OCI-LY7 (cell line): ENCODE measurements at regions of chr7 and their contacts with region 1.

Region 1: GRCh38 chr7:64887756-64888508 is 15.1 kb upstream of the ZNF273 start:
- DNase-seq: peak; percentile 42
- H3K4me3 ChIP-seq: no peak overlapping the region
- H3K27ac ChIP-seq: no peak overlapping the region
- H3K4me1 ChIP-seq: no peaks in the 10 kb centered on the region
- CTCF ChIP-seq: peak; percentile 82

Region 2: DNA sequence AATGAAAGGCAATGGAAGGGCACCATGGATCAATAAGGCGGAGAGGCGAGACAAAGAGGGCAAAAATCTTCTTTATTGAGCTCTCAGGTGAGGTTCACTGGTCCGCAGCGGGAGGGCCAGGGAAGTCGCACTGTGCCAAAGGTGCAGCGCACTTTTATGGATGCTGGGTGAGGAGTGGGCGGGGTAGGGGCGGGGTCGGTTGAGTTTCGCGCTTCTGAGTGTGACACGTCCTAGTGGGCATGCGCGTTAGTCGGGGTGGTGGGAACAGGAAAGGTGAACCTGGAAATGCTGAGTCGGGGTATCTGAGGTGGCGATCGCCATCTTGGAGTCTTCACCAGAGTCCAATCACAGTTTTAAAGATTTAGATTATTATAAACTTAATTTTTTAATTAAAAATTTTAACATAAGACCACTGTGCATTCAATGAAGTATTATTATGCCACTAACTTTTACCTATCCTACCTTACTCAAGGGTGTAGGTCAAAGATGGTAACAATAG is 48.1 kb before region 1 on chr7:
- CTCF ChIA-PET with region 1: no interaction called
- POLR2A ChIA-PET with region 1: no interaction called
- intact Hi-C with region 1: loop called (anchors 10 kb)
- DNase-seq: no peak
- H3K4me3 ChIP-seq: no peak overlapping the region
- H3K27ac ChIP-seq: no peak overlapping the region
- H3K4me1 ChIP-seq: no peaks in the 10 kb centered on the region
- CTCF ChIP-seq: no peak

Region 3: DNA sequence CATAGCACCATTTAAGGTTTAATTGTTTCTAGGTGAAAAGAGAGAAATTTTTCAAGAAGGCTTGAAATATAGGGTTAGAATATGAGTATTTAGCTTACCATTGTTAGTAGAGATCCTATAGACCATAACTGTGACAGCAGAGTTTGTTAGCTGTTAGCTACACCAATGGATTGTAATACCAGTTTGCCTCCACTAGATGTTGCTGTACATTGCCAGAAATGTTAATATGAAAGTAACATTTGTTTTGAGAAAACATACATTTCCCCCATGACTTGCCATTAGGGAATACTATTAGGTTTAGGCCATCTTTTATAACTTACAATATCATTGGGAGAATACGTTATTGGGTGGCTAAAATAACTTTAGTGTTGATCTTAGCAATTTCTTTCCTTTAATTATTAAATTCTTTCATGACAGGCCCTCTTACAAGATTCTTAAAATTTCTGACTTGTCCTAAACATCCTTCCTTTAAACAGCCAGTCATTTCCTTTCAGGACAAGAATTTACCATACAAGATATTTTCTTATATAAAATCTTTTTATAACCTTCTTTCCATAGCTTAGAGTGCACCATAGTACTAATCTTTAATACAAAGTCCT is 63.4 kb after region 1 on chr7:
- CTCF ChIA-PET with region 1: no interaction called
- POLR2A ChIA-PET with region 1: no interaction called
- intact Hi-C with region 1: loop called (anchors 2 kb)
- DNase-seq: peak; percentile 72
- H3K4me3 ChIP-seq: no peak overlapping the region
- H3K27ac ChIP-seq: no peak overlapping the region
- H3K4me1 ChIP-seq: no peaks in the 10 kb centered on the region
- CTCF ChIP-seq: peak; percentile 92